Activated T-helper 2 cell treated with anti-CD3 and anti-CD28 coated beads, Interferon-gamma antibody, Interleukin-2, Interleukin-4, amounts not matched to agents 10 μg/mL and 5 μg/mL and 100 μg/mL, durations not matched to agents 14 hours and 24 hours and 36 hours (primary cell): ENCODE measurements at regions of chr6 and their contacts with region 1.

Region 1: DNA sequence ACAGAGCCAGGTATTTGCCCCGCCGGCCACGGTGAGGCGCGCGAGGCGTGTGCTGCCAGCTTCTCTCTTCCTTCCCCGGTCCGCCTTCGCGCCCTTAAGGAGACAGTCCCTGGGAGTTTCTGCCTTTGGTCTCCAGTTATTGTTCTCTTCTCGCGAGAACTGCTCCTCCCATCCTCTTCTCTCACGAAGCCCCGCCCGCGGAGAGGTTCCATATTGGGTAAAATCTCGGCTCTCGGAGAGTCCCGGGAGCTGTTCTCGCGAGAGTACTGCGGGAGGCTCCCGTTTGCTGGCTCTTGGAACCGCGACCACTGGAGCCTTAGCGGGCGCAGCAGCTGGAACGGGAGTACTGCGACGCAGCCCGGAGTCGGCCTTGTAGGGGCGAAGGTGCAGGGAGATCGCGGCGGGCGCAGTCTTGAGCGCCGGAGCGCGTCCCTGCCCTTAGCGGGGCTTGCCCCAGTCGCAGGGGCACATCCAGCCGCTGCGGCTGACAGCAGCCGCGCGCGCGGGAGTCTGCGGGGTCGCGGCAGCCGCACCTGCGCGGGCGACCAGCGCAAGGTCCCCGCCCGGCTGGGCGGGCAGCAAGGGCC is at the start of gene MAPK14:
- DNase-seq: peak; percentile 99
- H3K4me3 Mint-ChIP-seq: peak within 1 kb of the TSS; percentile 95
- H3K27ac Mint-ChIP-seq: peak within 1 kb of the TSS; percentile 89
- H3K4me1 Mint-ChIP-seq: peaks cover 32% of the 10 kb centered on the region
- H3K27me3 Mint-ChIP-seq: peaks cover 21% of the 10 kb centered on the region
- total RNA-seq, gene MAPK14: 44.3 and 46.5 TPM in 2 replicates

Region 2: GRCh38 chr6:35973670-35974222 is 53.8 kb before region 1 on chr6:
- intact Hi-C with region 1: loop called (anchors 5 kb)
- DNase-seq: peak; percentile 24
- H3K4me3 Mint-ChIP-seq: no peak overlapping the region
- H3K27ac Mint-ChIP-seq: peak overlapping the region; percentile 0
- H3K4me1 Mint-ChIP-seq: peaks cover 6% of the 10 kb centered on the region
- H3K27me3 Mint-ChIP-seq: no peaks in the 10 kb centered on the region

Region 3: GRCh38 chr6:36123257-36124139 is 95.9 kb after region 1 on chr6:
- intact Hi-C with region 1: loop called (anchors 1 kb)
- DNase-seq: peak; percentile 86
- H3K4me3 Mint-ChIP-seq: no peak overlapping the region
- H3K27ac Mint-ChIP-seq: peak overlapping the region; percentile 36
- H3K4me1 Mint-ChIP-seq: peaks cover 59% of the 10 kb centered on the region
- H3K27me3 Mint-ChIP-seq: no peaks in the 10 kb centered on the region

Region 4: GRCh38 chr6:36196880-36197548 is 169.4 kb after region 1 on chr6:
- intact Hi-C with region 1: loop called (anchors 1 kb)
- DNase-seq: peak; percentile 99
- H3K4me3 Mint-ChIP-seq: peak overlapping the region; percentile 85
- H3K27ac Mint-ChIP-seq: peak overlapping the region; percentile 88
- H3K4me1 Mint-ChIP-seq: peaks cover 24% of the 10 kb centered on the region
- H3K27me3 Mint-ChIP-seq: peaks cover under 1% of the 10 kb centered on the region

Region 5: DNA sequence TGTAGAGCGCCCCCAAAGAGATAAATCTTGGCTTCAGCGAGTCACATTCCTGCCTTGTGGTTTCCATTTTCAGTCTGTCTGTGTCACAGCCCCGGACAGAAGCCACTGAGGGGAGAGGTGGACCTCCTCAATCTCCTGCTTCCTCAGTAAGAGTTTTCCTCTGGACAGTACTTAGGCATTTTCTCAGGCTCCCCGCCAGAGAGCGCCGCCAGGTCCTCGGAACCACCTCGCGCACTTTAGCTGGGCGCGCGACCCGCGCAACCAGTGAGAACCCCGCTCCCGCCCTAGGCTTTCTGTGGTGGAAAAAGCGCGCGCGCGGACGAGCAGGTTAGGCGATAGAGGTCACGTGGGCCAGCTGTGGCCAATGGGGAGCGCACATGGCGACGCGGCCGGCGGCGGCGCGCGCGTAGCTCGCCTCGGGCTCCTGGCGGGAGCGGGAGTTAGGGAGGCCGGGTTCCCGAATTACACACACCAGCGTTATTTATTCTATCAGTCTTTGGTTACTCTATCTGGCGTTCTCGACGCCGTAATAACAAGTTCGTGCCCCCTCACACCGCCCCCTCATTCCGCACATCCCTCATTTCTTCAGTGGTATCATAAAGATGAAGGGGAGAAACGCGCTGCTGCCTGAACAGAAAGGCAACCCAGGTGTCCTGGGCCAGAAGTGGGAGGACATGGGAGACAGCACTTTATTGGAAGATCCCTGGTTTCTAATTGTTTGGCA is 395.7 kb after region 1 on chr6:
- intact Hi-C with region 1: loop called (anchors 5 kb)
- DNase-seq: peak; percentile 97
- H3K4me3 Mint-ChIP-seq: peak overlapping the region; percentile 88
- H3K27ac Mint-ChIP-seq: peak overlapping the region; percentile 85
- H3K4me1 Mint-ChIP-seq: peaks cover 15% of the 10 kb centered on the region
- H3K27me3 Mint-ChIP-seq: peaks cover 7% of the 10 kb centered on the region

Region 6: GRCh38 chr6:36594029-36594815 is 566.6 kb after region 1 on chr6 and contains the start of gene SRSF3:
- intact Hi-C with region 1: loop called (anchors 5 kb)
- DNase-seq: peak; percentile 96
- H3K4me3 Mint-ChIP-seq: peak within 1 kb of the TSS; percentile 96
- H3K27ac Mint-ChIP-seq: peak within 1 kb of the TSS; percentile 99
- H3K4me1 Mint-ChIP-seq: peaks cover 26% of the 10 kb centered on the region
- H3K27me3 Mint-ChIP-seq: no peaks in the 10 kb centered on the region
- total RNA-seq, gene SRSF3: 512 and 541 TPM in 2 replicates